CD4-positive, alpha-beta memory T cell (primary cell): ENCODE measurements at regions of chr9 and their contacts with region 1.

Region 1: GRCh38 chr9:133144137-133144903 is 19.4 kb downstream of the GBGT1 start:
- DNase-seq: peak; percentile 89 to 98 (median 91)
- H3K4me3 ChIP-seq: peak overlapping the region; percentile 29 to 51
- H3K4me3 Mint-ChIP-seq: peak overlapping the region; percentile 75 to 85 (median 82)
- H3K27ac ChIP-seq: peak overlapping the region; percentile 79
- H3K27ac Mint-ChIP-seq: peak overlapping the region; percentile 94 to 100 (median 97)
- H3K4me1 ChIP-seq: peaks cover 86% of the 10 kb centered on the region
- H3K4me1 Mint-ChIP-seq: peaks cover 40 to 76% (median 64%) of the 10 kb centered on the region in 4 donors
- H3K27me3 ChIP-seq: no peaks in the 10 kb centered on the region
- H3K27me3 Mint-ChIP-seq: no peaks in the 10 kb centered on the region

Region 2: DNA sequence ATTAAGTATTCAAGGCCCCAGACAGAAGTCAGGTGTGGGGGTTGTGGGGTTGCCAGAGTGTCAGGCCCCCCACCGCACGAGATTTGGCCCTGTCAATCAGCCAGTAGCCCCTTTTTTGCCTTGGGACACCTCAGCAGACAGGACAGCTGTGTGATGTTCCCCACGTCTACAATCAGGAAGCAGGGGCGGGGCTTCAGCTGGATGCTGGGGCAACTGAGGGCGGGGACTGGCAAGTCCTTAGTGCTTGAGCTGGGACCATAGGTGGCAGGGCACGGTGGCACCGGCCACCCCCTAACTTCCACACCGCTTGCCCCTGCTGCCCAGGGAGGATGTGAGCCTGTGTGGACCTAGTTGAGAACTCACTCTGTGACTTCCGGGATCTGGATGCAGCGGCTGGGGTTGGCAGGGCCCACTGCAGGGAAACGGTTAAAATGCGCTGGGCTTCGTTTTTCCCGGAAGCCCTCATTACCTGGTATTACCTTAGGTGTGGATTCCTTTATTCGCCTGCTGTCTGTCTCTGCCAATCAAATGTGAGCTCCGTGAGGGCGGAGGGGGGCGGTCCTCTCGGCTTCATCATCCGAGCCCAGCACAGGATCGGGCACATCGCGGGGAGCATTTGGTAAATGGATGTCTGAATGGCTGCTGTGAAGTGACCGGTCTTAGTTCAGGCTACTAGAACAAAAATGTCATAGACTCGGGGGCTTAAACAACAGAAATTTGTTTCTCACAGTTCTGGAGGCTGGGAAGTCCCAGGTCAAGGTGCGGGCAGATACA is 121.0 kb before region 1 on chr9:
- CTCF ChIA-PET with region 1: interaction called, 23 read pairs
- POLR2A ChIA-PET with region 1: interaction called, 8 read pairs
- intact Hi-C with region 1: loop called (anchors 1 kb)
- DNase-seq: peak in 4 of 5 donors; percentile 7 to 58 (median 14)
- H3K4me3 ChIP-seq: no peak overlapping the region
- H3K4me3 Mint-ChIP-seq: peak overlapping the region in 1 of 8 donors; percentile 54
- H3K27ac ChIP-seq: no peak overlapping the region
- H3K27ac Mint-ChIP-seq: peak overlapping the region in 2 of 7 donors; percentile 3 to 17
- H3K4me1 ChIP-seq: peaks cover 15% of the 10 kb centered on the region
- H3K4me1 Mint-ChIP-seq: peaks cover 4 to 22% (median 16%) of the 10 kb centered on the region in 4 donors
- H3K27me3 ChIP-seq: no peaks in the 10 kb centered on the region
- H3K27me3 Mint-ChIP-seq: peaks cover 1 to 3% of the 10 kb centered on the region in 2 donors

Region 3: GRCh38 chr9:133030317-133031129 is 113.8 kb before region 1 on chr9 and contains the start of gene GTF3C5:
- CTCF ChIA-PET with region 1: interaction called, 17 read pairs
- POLR2A ChIA-PET with region 1: interaction called, 59 read pairs
- intact Hi-C with region 1: loop called (anchors 1 kb)
- DNase-seq: peak; percentile 94 to 97 (median 95)
- H3K4me3 ChIP-seq: peak within 1 kb of the TSS; percentile 84 to 97
- H3K4me3 Mint-ChIP-seq: peak within 1 kb of the TSS; percentile 93 to 99 (median 98)
- H3K27ac ChIP-seq: peak within 1 kb of the TSS; percentile 83
- H3K27ac Mint-ChIP-seq: peak within 1 kb of the TSS; percentile 94 to 99 (median 98)
- H3K4me1 ChIP-seq: peaks cover 27% of the 10 kb centered on the region
- H3K4me1 Mint-ChIP-seq: peaks cover 17 to 69% (median 47%) of the 10 kb centered on the region in 4 donors
- H3K27me3 ChIP-seq: no peaks in the 10 kb centered on the region
- H3K27me3 Mint-ChIP-seq: no peaks in the 10 kb centered on the region
- total RNA-seq, gene GTF3C5: 71.3 to 71.5 TPM

Region 4: GRCh38 chr9:133103183-133103986 is 40.9 kb before region 1 on chr9:
- CTCF ChIA-PET with region 1: interaction called, 596 read pairs
- POLR2A ChIA-PET with region 1: interaction called, 345 read pairs
- intact Hi-C with region 1: loop called (anchors 1 kb)
- DNase-seq: peak; percentile 42 to 59 (median 48)
- H3K4me3 ChIP-seq: no peak overlapping the region
- H3K4me3 Mint-ChIP-seq: no peak overlapping the region
- H3K27ac ChIP-seq: peak overlapping the region; percentile 15
- H3K27ac Mint-ChIP-seq: peak overlapping the region in 6 of 7 donors; percentile 52 to 88 (median 82)
- H3K4me1 ChIP-seq: no peaks in the 10 kb centered on the region
- H3K4me1 Mint-ChIP-seq: no peaks in the 10 kb centered on the region
- H3K27me3 ChIP-seq: no peaks in the 10 kb centered on the region
- H3K27me3 Mint-ChIP-seq: no peaks in the 10 kb centered on the region

Region 5: DNA sequence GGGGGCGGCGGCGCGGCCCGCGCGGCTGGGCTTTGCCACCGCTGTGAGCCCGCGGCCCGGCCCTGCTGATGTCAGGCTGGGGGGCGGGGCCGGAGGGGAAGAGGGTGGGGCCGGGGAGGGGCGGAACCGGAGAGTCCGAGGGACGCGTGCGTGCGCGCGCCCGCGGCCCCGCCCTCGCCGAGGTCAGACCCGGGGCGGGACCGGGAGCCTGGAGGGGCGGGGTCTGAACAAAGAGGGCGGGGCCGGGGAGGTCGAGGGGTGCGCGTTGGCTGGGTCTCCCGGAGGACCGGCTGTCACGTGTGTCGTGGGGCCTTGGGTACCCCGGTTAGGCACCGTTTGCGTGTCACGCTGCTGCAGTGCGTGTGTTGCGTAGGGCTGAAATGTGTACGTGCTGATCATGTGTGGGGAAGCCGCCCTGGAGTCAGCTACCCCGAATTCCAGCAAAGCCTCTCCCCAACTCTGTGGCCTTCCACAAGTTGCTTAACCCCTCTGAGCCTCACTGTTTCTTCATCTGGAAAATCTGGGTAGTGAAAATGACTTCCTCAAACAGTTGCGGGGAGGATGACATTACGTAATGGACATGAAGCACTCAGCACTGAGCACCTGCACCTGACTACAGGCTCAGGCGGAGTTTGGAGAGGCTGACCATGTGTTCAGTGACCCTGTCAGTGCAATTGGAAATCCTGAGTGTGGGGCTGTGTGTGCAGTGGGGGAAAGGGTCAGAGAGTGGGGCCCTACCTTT is 23.0 kb before region 1 on chr9 and contains the start of gene RALGDS:
- CTCF ChIA-PET with region 1: interaction called, 596 read pairs
- POLR2A ChIA-PET with region 1: interaction called, 424 read pairs
- intact Hi-C with region 1: loop called (anchors 1 kb)
- DNase-seq: peak; percentile 85 to 91 (median 87)
- H3K4me3 ChIP-seq: peak within 1 kb of the TSS in 1 of 2 donors; percentile 55
- H3K4me3 Mint-ChIP-seq: peak within 1 kb of the TSS; percentile 69 to 84 (median 80)
- H3K27ac ChIP-seq: peak within 1 kb of the TSS; percentile 88
- H3K27ac Mint-ChIP-seq: peak within 1 kb of the TSS; percentile 95 to 100 (median 98)
- H3K4me1 ChIP-seq: peaks cover 93% of the 10 kb centered on the region
- H3K4me1 Mint-ChIP-seq: peaks cover 36 to 86% (median 64%) of the 10 kb centered on the region in 4 donors
- H3K27me3 ChIP-seq: no peaks in the 10 kb centered on the region
- H3K27me3 Mint-ChIP-seq: no peaks in the 10 kb centered on the region
- total RNA-seq, gene RALGDS: 123 to 131 TPM

Region 6: DNA sequence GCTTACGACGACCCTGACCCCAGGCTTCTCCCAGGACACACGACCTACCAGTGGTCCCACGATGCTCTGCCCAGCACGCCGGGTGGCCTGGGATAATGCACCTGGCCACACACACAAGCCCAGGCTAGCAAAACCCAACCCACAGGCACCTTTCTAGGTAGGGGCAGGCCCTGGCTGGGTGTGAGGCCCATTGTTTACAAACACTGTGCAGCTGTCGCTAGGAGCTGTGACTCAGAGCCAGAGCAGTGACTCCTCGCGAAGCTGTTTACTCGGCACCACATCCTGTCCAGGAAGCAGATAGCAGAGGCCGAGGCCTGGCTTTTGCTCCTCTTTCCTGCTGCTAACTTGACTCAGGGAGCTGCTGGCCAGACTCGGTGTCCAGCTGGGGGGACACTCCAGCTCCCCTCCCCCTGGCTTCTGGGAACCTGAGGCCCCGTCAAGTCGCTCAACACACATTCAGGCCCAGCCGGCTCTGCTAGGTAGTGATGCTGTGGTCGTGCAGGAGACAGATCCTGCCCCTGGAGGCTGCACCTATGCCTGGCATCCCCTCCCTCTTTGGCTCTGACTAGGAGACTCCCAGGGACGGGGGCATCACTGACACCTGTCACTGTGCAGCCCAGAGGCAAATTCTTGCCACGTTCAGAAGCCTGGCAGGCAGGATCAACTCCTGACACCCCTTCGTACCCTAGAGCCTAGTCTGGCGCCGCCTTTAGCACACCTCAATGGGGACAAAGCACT is 10.5 kb before region 1 on chr9:
- CTCF ChIA-PET with region 1: interaction called, 282 read pairs
- POLR2A ChIA-PET with region 1: interaction called, 424 read pairs
- intact Hi-C with region 1: loop called (anchors 1 kb)
- DNase-seq: peak; percentile 90 to 98 (median 95)
- H3K4me3 ChIP-seq: peak overlapping the region in 1 of 2 donors; percentile 33
- H3K4me3 Mint-ChIP-seq: peak overlapping the region; percentile 75 to 99 (median 88)
- H3K27ac ChIP-seq: peak overlapping the region; percentile 100
- H3K27ac Mint-ChIP-seq: peak overlapping the region; percentile 100
- H3K4me1 ChIP-seq: peaks cover 99% of the 10 kb centered on the region
- H3K4me1 Mint-ChIP-seq: peaks cover 42 to 93% (median 68%) of the 10 kb centered on the region in 4 donors
- H3K27me3 ChIP-seq: no peaks in the 10 kb centered on the region
- H3K27me3 Mint-ChIP-seq: no peaks in the 10 kb centered on the region